ENCODE measurements at regions of chr10 and their contacts with region 1.

Region 1: GRCh38 chr10:23158370-23158769 is 33.7 kb upstream of the PTF1A start:
- DNase-seq: no peak
- ATAC-seq: peak; percentile 59

Region 2: DNA sequence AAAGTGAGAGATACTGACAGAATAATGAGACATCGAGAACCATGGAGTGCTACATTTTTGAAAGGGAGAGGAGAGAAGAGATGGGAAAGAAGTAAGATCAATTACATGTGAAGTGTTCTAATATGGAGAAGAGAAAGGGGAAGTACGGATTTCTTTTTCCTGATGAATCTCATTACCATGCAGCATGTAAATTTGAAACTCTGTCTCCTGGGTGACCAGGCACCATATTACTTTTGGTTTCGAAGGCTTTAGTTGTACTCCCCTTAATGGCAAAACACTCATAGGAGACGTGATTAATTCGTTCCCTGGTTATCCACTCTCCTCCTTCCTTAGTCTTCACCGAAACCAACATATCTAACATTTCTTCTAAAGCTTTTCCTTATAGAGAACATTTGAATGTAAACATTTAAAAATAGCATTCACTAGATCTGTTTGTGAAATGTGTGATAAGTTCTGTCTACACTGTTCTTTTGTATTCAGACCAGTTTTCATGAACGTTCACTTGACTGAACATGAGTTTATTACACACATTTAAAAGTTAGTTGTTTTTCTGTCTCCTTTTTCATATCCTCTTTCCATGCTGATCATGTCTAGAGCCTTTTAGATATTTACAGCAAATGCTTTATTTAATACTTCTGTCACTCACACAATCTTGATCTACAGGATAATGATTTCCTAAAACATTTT is 143.2 kb before region 1 on chr10:
- intact Hi-C with region 1: no loop called
- DNase-seq: no peak
- ATAC-seq: no peak

Region 3: GRCh38 chr10:23120001-23120934 is 38.1 kb before region 1 on chr10:
- intact Hi-C with region 1: no loop called
- DNase-seq: no peak
- ATAC-seq: no peak

Region 4: DNA sequence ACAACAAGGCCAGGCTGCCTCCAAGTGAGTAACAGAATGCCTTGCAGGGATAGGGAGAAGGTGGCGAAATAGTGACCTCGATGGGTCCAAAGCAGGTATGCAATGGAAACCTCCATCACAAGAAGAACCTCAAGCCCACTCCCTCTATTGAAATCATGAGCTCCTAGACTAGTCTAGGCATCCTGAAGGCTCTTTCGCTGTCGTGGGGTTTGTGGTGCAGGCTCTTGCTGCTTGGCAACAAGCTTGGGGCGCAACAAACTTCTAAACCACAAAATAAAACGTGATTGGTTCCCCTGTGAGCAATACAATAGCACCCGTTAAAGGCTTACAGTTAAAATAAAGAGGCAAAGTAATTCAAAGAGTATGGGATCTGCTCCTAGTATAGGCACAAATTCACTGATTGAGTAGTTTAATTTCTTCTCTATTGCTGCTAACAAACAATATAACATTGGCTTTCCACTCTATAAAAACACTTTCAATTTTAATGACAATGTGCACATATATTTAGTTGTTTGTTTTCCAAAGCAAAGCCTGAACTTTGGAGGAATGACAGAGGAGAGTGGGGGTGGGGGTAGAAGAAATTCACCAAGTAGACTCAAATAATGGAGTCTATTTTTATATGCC is 122.2 kb after region 1 on chr10:
- intact Hi-C with region 1: loop called (anchors 10 kb)
- DNase-seq: no peak
- ATAC-seq: no peak

Region 5: GRCh38 chr10:23525406-23525805 is 367.0 kb after region 1 on chr10:
- intact Hi-C with region 1: loop called (anchors 5 kb)
- DNase-seq: no peak
- ATAC-seq: peak; percentile 60

Region 6: DNA sequence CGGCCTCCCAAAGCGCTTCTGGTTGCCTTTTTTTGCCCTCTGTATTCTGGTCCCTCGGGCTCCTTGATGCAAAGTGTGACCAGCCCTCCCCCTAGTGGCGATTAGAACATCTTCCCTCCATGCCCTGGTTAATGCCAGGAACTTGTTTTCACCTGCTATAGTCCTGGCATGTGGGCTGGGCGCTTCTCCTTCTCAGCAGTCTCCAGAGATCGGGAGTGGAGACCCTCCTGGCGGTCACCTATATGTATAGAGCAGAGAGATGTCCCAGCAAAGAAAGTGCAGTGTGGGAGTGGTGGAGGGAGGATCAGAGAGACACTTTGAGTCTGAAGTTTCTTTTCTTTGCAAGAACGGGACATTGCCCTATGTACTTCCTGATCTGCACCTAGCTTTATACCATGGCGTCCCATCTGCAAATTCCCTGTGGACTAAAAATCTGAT is 544.6 kb after region 1 on chr10:
- intact Hi-C with region 1: loop called (anchors 5 kb)
- DNase-seq: no peak
- ATAC-seq: peak; percentile 56

Region 7: GRCh38 chr10:24556750-24557742 is 1398.7 kb after region 1 on chr10:
- intact Hi-C with region 1: loop called (anchors 10 kb)
- DNase-seq: no peak
- ATAC-seq: peak; percentile 26